AG04450 (cell line): ENCODE measurements at regions of chr1 and their contacts with region 1.

Region 1: DNA sequence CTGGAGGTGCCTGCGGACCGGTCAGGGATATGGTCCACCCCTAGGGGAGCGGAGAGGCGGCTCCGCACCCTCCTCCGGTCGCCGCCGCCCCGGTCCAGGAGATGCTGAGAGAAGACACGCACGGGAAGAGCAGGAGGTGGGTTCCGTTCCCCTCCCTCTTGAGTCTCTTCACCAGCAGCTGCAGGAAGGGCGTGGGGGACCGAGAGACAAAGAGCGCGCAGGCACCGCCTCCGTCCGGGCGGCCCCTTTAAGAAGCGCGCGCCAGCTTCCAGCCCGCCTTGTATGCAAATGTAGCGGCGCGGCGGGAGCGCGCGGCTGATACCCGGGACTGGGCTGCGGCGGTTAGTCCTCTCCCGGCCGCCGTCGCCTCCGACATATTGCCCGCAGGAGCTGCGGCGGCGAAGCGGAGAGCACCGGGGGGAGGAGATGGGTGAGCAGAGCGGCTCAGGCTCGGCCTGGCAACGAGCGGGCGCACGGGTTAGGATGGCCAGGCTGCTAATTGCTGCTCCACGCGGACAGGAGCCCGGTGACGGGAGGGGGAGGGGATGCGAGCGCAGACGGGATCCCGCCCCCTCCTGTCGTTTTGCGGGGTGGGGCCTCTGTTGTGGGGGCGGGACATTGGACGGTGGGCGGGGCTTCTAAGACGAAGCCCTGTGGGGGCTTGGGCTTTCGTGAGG is at the start of gene TMEM39B:
- DNase-seq: peak; percentile 88
- H3K4me3 ChIP-seq: peak within 1 kb of the TSS; percentile 90
- H3K27ac ChIP-seq: peak within 1 kb of the TSS; percentile 96
- H3K27me3 ChIP-seq: no peaks in the 10 kb centered on the region
- CTCF ChIP-seq: no peak
- polyA plus RNA-seq, gene TMEM39B: 16.2 and 21.0 TPM in 2 replicates

Region 2: GRCh38 chr1:32013386-32014198 is 59.2 kb before region 1 on chr1 and contains the start of gene KHDRBS1:
- CTCF ChIA-PET with region 1: interaction called, 3 read pairs
- POLR2A ChIA-PET with region 1: interaction called, 10 read pairs
- DNase-seq: peak; percentile 99
- H3K4me3 ChIP-seq: peak within 1 kb of the TSS; percentile 99
- H3K27ac ChIP-seq: peak within 1 kb of the TSS; percentile 96
- H3K27me3 ChIP-seq: no peaks in the 10 kb centered on the region
- CTCF ChIP-seq: no peak
- polyA plus RNA-seq, gene KHDRBS1: 76.2 and 76.6 TPM in 2 replicates

Region 3: DNA sequence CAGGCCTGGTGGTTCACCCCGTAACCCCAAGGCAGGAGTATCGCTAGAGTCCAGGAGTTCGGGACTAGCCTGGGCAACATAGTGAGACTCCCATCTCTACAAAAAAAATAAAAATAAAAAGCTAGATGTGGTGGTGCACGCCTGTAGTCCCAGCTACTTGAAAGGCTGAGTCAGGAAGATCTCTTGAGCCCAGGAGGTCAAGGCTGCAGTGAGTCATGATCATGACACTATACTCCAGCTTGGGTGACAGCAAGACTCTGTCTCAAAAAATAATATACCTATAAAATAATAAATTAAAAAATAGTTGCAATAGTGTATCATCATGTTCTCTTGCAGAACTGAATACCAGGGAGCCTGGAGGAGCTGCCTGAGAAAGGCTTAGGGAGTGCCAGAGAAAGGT is 19.9 kb before region 1 on chr1:
- CTCF ChIA-PET with region 1: interaction called, 10 read pairs
- POLR2A ChIA-PET with region 1: interaction called, 4 read pairs
- DNase-seq: no peak
- H3K4me3 ChIP-seq: no peak overlapping the region
- H3K27ac ChIP-seq: no peak overlapping the region
- H3K27me3 ChIP-seq: no peaks in the 10 kb centered on the region
- CTCF ChIP-seq: no peak

Region 4: DNA sequence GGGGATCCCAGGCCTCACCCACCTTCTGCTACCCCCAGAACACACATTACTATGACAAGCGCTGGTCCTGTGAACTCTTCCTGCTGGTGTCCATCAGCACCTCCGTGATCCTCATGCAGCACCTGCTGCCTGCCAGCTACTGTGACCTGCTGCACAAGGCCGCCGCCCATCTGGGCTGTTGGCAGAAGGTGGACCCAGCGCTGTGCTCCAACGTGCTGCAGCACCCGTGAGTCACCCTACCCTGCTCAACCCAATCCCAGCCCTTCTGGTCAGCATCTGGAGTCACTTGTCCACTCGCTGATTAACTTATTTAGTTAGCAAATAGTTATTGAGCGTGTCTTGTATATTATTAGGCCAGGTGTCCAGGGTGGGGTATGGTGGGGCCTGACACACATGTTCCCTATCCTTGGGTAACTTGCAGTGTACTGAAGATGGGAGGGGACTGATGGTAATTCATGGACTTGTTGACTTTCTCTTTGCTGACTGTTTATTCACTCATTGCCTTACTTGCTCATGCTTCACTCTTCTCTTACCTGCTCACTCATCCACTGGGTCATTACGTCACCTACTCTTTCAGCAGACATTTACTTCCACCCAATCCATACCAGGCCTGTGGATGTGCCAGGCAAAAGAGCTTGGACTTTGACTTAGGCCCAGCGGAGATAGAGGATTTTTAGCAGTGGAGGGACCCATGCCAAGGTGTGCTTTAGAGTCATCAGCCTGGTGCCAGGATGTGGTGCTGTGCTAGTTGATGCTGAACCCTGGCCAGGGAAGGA is 22.2 kb after region 1 on chr1:
- CTCF ChIA-PET with region 1: no interaction called
- POLR2A ChIA-PET with region 1: interaction called, 10 read pairs
- DNase-seq: no peak
- H3K4me3 ChIP-seq: no peak overlapping the region
- H3K27ac ChIP-seq: no peak overlapping the region
- H3K27me3 ChIP-seq: no peaks in the 10 kb centered on the region
- CTCF ChIP-seq: no peak

Region 5: GRCh38 chr1:32107742-32108661 is 35.2 kb after region 1 on chr1 and contains the start of gene KPNA6:
- CTCF ChIA-PET with region 1: interaction called, 20 read pairs
- POLR2A ChIA-PET with region 1: interaction called, 18 read pairs
- DNase-seq: peak; percentile 92
- H3K4me3 ChIP-seq: peak within 1 kb of the TSS; percentile 98
- H3K27ac ChIP-seq: peak within 1 kb of the TSS; percentile 89
- H3K27me3 ChIP-seq: no peaks in the 10 kb centered on the region
- CTCF ChIP-seq: no peak
- polyA plus RNA-seq, gene KPNA6: 45.9 and 54.4 TPM in 2 replicates